CD4-positive, alpha-beta T cell (primary cell): ENCODE measurements at regions of chr7 and their contacts with region 1.

Region 1: GRCh38 chr7:35537067-35538023 is 157.6 kb downstream of the HERPUD2 start:
- DNase-seq: peak; percentile 54 to 87 (median 74)
- ATAC-seq: peak; percentile 99
- H3K4me3 ChIP-seq: peak overlapping the region; percentile 37
- H3K4me3 Mint-ChIP-seq: peak overlapping the region; percentile 81
- H3K27ac ChIP-seq: no peak overlapping the region
- H3K27ac Mint-ChIP-seq: no peak overlapping the region
- H3K4me1 ChIP-seq: peaks cover 7% of the 10 kb centered on the region
- H3K4me1 Mint-ChIP-seq: peaks cover 5% of the 10 kb centered on the region
- H3K27me3 ChIP-seq: peaks cover 0 to 5% of the 10 kb centered on the region in 2 experiments
- H3K27me3 Mint-ChIP-seq: peaks cover 15% of the 10 kb centered on the region
- CTCF ChIP-seq: peak; percentile 96

Region 2: DNA sequence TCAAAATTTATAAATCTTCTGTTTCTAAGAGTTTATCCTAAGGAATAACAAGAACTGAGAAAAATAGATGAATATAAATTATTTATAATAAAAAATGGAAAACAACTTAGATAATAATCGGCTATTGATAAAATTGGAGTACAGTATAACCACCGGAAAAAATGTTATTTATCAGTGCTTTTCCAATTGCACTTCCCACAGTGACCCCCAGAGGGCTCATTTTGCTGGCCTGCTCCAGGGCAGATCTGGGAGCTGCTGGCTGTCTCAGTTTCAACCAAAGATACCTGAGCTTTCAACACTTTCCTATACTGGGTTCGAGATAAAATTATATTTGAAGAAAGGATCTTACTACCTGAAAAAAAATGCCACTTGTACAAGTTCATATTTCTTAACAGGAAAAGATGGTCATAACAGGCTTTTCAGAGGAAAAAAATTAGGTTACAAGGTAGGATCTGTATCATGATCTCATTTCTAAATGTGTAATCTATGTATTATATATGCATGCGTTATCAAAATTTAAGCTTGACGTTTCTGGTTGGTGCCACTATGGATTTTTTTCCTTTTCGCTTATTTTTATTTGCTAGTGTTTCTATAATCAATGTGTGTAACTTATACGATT is 713.6 kb before region 1 on chr7:
- CTCF ChIA-PET with region 1: no interaction called
- POLR2A ChIA-PET with region 1: no interaction called
- intact Hi-C with region 1: loop called in 1 of 2 experiments (anchors 5 kb)
- DNase-seq: peak; percentile 16 to 68 (median 47)
- ATAC-seq: peak; percentile 51
- H3K4me3 ChIP-seq: no peak overlapping the region
- H3K4me3 Mint-ChIP-seq: no peak overlapping the region
- H3K27ac ChIP-seq: no peak overlapping the region
- H3K27ac Mint-ChIP-seq: no peak overlapping the region
- H3K4me1 ChIP-seq: no peaks in the 10 kb centered on the region
- H3K4me1 Mint-ChIP-seq: no peaks in the 10 kb centered on the region
- H3K27me3 ChIP-seq: no peaks in the 10 kb centered on the region
- H3K27me3 Mint-ChIP-seq: no peaks in the 10 kb centered on the region
- CTCF ChIP-seq: peak; percentile 93

Region 3: DNA sequence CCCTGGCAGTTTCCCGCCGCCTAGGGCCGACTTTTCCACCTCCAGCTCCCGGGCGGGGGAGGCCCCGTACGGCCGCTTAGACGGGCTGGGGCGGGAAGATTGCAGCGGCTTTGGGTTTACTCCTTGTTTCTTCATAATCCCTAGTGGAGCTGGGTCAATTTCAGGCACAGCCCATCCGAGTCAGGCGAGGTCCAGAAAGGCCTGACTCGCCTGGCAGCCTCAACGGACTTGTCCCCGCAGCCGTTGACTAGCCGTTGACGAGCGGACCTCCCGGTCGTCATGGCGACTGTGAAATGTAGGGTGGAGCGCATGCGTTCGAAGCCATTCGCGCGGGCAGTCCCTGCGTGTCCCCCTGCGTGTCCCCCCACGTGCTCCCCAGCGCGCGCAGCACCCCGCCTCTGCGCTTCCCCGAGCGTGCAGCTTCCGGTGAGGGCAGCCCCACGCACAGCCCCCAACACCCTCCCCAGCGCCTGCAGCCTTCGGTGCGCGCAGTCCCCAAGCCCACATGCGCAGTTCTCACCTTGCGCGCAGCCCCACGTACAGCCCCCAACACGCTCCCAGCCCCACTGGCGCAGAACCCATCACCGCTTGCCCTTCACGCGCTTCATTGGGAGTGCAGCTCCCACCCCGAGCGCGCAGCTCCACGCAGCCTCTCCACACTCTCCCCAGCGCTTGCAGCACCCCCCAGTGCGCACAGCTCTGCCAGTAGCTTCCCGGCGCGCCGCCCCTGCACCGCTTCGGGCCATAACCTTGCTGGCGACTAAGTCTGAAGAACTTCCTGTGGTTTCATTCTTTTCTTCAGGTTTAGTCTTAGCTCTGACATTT is 351.2 kb before region 1 on chr7:
- CTCF ChIA-PET with region 1: no interaction called
- POLR2A ChIA-PET with region 1: no interaction called
- intact Hi-C with region 1: loop called (anchors 10 kb)
- DNase-seq: peak in 1 of 14 experiments; percentile 4
- ATAC-seq: no peak
- H3K4me3 ChIP-seq: no peak overlapping the region
- H3K4me3 Mint-ChIP-seq: peak overlapping the region; percentile 11
- H3K27ac ChIP-seq: no peak overlapping the region
- H3K27ac Mint-ChIP-seq: no peak overlapping the region
- H3K4me1 ChIP-seq: no peaks in the 10 kb centered on the region
- H3K4me1 Mint-ChIP-seq: peaks cover 11% of the 10 kb centered on the region
- H3K27me3 ChIP-seq: peaks cover 0 to 6% of the 10 kb centered on the region in 2 experiments
- H3K27me3 Mint-ChIP-seq: peaks cover 44% of the 10 kb centered on the region
- CTCF ChIP-seq: no peak

Region 4: GRCh38 chr7:35424869-35425495 is 112.4 kb before region 1 on chr7:
- CTCF ChIA-PET with region 1: no interaction called
- POLR2A ChIA-PET with region 1: no interaction called
- intact Hi-C with region 1: loop called (anchors 2 to 5 kb)
- DNase-seq: peak; percentile 17 to 78 (median 36)
- ATAC-seq: peak; percentile 76
- H3K4me3 ChIP-seq: no peak overlapping the region
- H3K4me3 Mint-ChIP-seq: no peak overlapping the region
- H3K27ac ChIP-seq: no peak overlapping the region
- H3K27ac Mint-ChIP-seq: no peak overlapping the region
- H3K4me1 ChIP-seq: no peaks in the 10 kb centered on the region
- H3K4me1 Mint-ChIP-seq: peaks cover 9% of the 10 kb centered on the region
- H3K27me3 ChIP-seq: peaks cover 0 to 5% of the 10 kb centered on the region in 2 experiments
- H3K27me3 Mint-ChIP-seq: peaks cover 37% of the 10 kb centered on the region
- CTCF ChIP-seq: peak; percentile 70